Posterior cingulate gyrus (tissue), 11 donors: ENCODE measurements at regions of chr10 and their contacts with region 1.

Region 1: DNA sequence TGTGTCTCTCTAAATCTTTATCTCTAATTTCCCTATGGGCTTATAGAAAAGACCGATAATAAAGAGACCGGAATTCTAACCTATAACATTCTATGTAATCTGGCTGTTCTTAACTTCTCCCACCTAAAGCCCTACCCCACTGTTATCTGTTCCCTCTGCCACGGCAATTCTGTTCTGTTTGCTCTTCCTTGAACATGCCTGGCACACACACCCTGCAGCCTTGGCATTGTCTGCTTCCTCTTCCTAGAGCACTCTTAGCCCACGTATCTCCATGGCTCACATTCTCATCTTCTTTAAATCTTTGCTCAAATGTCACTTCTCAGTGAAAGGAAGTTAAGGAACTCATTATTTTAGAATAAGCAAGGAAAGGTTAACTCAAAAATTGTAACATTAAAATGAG is 309.2 kb downstream of the GPR158 start:
- DNase-seq: peak in 2 of 10 donors; percentile 37 to 83

Region 2: DNA sequence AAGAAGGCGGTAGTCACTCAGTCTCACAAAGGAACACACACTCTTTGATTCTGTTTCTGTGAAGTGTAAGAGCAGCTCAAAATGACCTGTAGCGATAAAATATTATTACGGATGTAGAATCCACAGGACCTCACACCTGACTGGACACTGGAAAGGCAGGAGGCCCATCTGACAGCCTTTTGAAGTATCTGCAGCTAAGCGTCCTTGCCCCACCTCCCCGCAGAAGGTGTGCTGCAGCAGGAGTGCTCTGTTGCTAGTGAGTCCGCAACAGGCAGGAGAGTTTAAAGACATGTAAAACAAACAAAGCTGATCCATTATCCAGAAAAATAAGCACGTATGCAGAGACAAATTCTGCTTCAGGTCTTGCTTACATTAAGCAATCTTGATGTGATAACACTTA is 46.3 kb after region 1 on chr10:
- intact Hi-C with region 1: loop called (anchors 2 kb)
- DNase-seq: no peak